ENCODE measurements at regions of chr13 and their contacts with region 1.

Region 1: GRCh38 chr13:95834134-95834765 is 157.3 kb downstream of the DNAJC3 start:
- DNase-seq: no peak
- H3K4me3 ChIP-seq: no peak overlapping the region
- H3K27ac ChIP-seq: no peak overlapping the region
- H3K4me1 ChIP-seq: peaks cover 0 to 7% (median 6%) of the 10 kb centered on the region in 4 donors
- H3K27me3 ChIP-seq: no peaks in the 10 kb centered on the region
- CTCF ChIP-seq: peak; percentile 88 to 89 (median 88)
- EP300 ChIP-seq: no peak
- POLR2A ChIP-seq: no peak

Region 2: DNA sequence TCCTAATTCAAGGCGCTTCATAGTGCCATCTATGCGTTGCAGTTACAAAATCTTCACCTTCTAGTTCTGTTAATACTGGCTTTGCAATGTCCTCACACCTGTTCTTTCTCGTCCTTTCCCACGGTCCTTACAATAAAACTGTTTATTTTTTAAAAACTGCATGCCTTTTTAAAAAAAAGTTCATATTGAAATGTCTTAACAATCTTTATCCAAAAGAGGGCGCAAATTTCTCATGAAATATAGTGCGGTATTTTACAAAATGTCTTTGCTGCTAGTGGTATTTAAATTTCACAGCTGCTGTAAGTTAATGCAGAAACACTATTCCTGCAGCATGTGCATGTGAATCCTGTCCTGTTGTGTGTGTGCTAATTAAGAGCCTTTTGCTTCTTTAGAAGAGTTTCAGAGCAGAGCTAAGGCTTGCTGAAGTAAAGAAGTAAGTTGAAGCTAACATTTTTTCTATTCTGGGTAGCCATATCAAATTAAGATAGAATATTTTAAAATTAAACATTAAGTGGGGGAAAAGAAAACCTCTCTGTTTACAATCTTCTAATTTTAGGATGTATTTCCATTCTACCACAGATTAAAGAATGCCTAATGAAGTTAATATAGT is 297.5 kb before region 1 on chr13:
- intact Hi-C with region 1: loop called (anchors 5 kb)
- DNase-seq: no peak
- H3K4me3 ChIP-seq: no peak overlapping the region
- H3K27ac ChIP-seq: no peak overlapping the region
- H3K4me1 ChIP-seq: no peaks in the 10 kb centered on the region
- H3K27me3 ChIP-seq: no peaks in the 10 kb centered on the region
- CTCF ChIP-seq: peak; percentile 13 to 36 (median 28)
- EP300 ChIP-seq: no peak
- POLR2A ChIP-seq: no peak

Region 3: GRCh38 chr13:95624020-95624419 is 210.2 kb before region 1 on chr13:
- intact Hi-C with region 1: loop called (anchors 2 kb)
- DNase-seq: peak; percentile 7
- H3K4me3 ChIP-seq: no peak overlapping the region
- H3K27ac ChIP-seq: no peak overlapping the region
- H3K4me1 ChIP-seq: peaks cover 0 to 5% (median 0%) of the 10 kb centered on the region in 4 donors
- H3K27me3 ChIP-seq: no peaks in the 10 kb centered on the region
- CTCF ChIP-seq: peak; percentile 55 to 65 (median 64)
- EP300 ChIP-seq: no peak
- POLR2A ChIP-seq: no peak

Region 4: GRCh38 chr13:95793018-95793555 is 41.2 kb before region 1 on chr13:
- intact Hi-C with region 1: no loop called
- DNase-seq: no peak
- H3K4me3 ChIP-seq: no peak overlapping the region
- H3K27ac ChIP-seq: no peak overlapping the region
- H3K4me1 ChIP-seq: no peaks in the 10 kb centered on the region
- H3K27me3 ChIP-seq: no peaks in the 10 kb centered on the region
- CTCF ChIP-seq: no peak
- EP300 ChIP-seq: no peak
- POLR2A ChIP-seq: no peak